T-cell (primary cell): ENCODE measurements at regions of chr10 and their contacts with region 1.

Region 1: GRCh38 chr10:22589851-22590514 is 124.4 kb downstream of the PIP4K2A start:
- DNase-seq: no peak
- ATAC-seq: no peak
- H3K4me3 ChIP-seq: no peak overlapping the region
- H3K4me3 Mint-ChIP-seq: no peak overlapping the region
- H3K27ac ChIP-seq: no peak overlapping the region
- H3K27ac Mint-ChIP-seq: peak overlapping the region; percentile 49 to 80
- H3K4me1 ChIP-seq: peaks cover 0 to 34% of the 10 kb centered on the region in 2 experiments
- H3K4me1 Mint-ChIP-seq: peaks cover 51 to 79% (median 72%) of the 10 kb centered on the region in 3 donors
- H3K27me3 ChIP-seq: no peaks in the 10 kb centered on the region
- H3K27me3 Mint-ChIP-seq: no peaks in the 10 kb centered on the region

Region 2: GRCh38 chr10:22573820-22574569 is 16.0 kb before region 1 on chr10:
- CTCF ChIA-PET with region 1: interaction called, 6 to 12 read pairs
- POLR2A ChIA-PET with region 1: interaction called in 1 of 2 experiments, 6 read pairs
- DNase-seq: peak in 27 of 35 experiments; percentile 4 to 72 (median 18)
- ATAC-seq: peak; percentile 49 to 67 (median 53)
- H3K4me3 ChIP-seq: no peak overlapping the region
- H3K4me3 Mint-ChIP-seq: no peak overlapping the region
- H3K27ac ChIP-seq: peak overlapping the region; percentile 40
- H3K27ac Mint-ChIP-seq: peak overlapping the region; percentile 74 to 76
- H3K4me1 ChIP-seq: peaks cover 3 to 36% of the 10 kb centered on the region in 2 experiments
- H3K4me1 Mint-ChIP-seq: peaks cover 60 to 77% (median 75%) of the 10 kb centered on the region in 3 donors
- H3K27me3 ChIP-seq: no peaks in the 10 kb centered on the region
- H3K27me3 Mint-ChIP-seq: no peaks in the 10 kb centered on the region

Region 3: DNA sequence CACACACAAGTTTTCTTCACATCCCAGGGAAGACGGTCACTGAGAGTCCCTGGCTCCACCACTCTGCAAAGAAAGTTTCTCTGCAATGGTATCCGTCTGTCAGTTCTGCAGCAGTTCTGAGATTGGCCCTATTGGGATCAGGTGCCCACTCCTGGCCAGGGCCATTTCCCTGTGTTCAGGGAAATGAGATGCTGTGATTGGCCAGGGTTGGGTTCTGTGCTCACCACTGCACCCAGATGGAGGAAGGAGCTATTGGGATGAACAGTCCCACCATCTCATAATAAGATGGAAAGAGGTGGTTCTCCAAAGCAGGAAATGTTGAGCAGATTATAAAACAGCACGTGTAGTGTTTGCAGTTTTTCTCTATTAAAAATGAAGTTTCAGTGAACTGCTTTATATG is 137.7 kb after region 1 on chr10:
- CTCF ChIA-PET with region 1: no interaction called
- POLR2A ChIA-PET with region 1: no interaction called
- DNase-seq: no peak
- ATAC-seq: no peak
- H3K4me3 ChIP-seq: no peak overlapping the region
- H3K4me3 Mint-ChIP-seq: no peak overlapping the region
- H3K27ac ChIP-seq: no peak overlapping the region
- H3K27ac Mint-ChIP-seq: no peak overlapping the region
- H3K4me1 ChIP-seq: peaks cover 0 to 2% of the 10 kb centered on the region in 2 experiments
- H3K4me1 Mint-ChIP-seq: peaks cover 14 to 20% (median 17%) of the 10 kb centered on the region in 3 donors
- H3K27me3 ChIP-seq: no peaks in the 10 kb centered on the region
- H3K27me3 Mint-ChIP-seq: no peaks in the 10 kb centered on the region